Sciatic nerve (tissue), 2 donors: ENCODE measurements at regions of chr9 and their contacts with region 1.

Region 1: DNA sequence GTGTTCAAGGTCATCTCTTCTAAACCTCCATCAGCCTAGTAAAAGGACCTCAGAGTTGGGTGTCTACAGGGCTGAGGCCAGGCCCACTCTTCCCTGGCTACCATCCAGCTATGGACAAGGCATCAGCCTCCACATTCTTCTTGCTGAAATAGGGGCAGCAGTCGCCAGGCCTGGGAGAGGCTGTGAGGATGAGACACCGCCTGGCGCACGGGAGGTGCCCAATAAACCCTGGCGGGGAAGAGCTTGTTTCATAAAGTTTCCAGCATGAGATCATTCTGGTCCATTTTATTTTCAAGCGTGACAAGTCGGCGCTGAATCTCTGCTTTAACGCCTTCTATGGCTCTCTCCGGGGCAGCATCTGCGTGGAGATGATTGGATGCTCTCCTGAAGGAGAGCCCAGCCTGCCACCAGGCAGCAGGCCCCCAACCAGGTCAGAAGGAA is 153.4 kb downstream of the OLFM1 start:
- DNase-seq: no peak
- ATAC-seq: no peak

Region 2: DNA sequence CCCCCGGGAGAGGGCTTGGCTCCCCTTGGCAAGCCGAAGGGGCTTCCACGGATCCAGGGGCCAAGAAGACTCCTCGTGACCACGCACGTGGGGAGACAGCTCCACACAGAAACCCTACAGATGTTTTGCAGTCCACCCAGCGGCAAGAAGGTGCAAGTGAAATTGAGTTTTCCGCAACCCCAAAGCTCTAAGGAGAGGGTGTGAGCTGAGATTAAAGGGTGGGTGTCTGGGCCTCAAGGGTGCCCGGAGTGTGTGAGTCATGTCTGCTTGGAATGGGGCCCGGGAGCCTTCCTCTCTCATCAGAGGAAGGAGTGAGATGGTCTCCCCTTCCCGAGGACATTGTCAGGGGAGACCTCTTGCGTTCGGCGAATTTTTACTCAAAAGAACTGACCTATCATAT is 74.3 kb before region 1 on chr9:
- intact Hi-C with region 1: loop called (anchors 1 kb)
- DNase-seq: no peak
- ATAC-seq: no peak